ENCODE measurements at regions of chr4 and their contacts with region 1.

Region 1: GRCh38 chr4:10951306-10951705 is 266.7 kb upstream of the CLNK start:
- DNase-seq: no peak
- ATAC-seq: no peak
- H3K4me3 ChIP-seq: no peak overlapping the region
- H3K4me3 Mint-ChIP-seq: no peak overlapping the region
- H3K27ac ChIP-seq: no peak overlapping the region
- H3K27ac Mint-ChIP-seq: no peak overlapping the region
- H3K4me1 ChIP-seq: no peaks in the 10 kb centered on the region
- H3K4me1 Mint-ChIP-seq: peaks cover 0 to 19% (median 11%) of the 10 kb centered on the region in 7 donors
- H3K27me3 ChIP-seq: no peaks in the 10 kb centered on the region
- H3K27me3 Mint-ChIP-seq: peaks cover 0 to 8% (median 0%) of the 10 kb centered on the region in 5 donors

Region 2: DNA sequence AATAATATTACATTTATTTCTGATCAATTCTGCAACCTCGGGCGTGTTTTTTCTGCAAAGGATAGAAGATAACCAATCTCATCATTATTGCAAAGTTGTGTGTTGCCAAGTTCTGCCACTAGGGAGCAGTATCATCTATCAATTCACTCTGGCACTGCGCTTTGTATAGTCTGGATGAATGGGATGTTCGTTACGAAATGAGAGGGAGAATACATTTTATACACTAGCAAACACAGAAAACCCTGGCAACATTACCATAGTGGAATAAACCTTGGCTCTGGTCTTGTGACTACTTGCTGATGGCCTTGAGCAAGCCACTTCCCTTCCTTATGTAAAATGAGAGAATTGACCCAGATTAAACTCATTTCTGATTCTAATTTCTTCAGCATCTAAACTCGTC is 396.6 kb before region 1 on chr4:
- CTCF ChIA-PET with region 1: no interaction called
- POLR2A ChIA-PET with region 1: no interaction called
- intact Hi-C with region 1: no loop called
- DNase-seq: peak in 6 of 9 donors; percentile 12 to 55 (median 40)
- ATAC-seq: peak; percentile 76
- H3K4me3 ChIP-seq: no peak overlapping the region
- H3K4me3 Mint-ChIP-seq: peak overlapping the region in 3 of 10 donors; percentile 2 to 32 (median 27)
- H3K27ac ChIP-seq: no peak overlapping the region
- H3K27ac Mint-ChIP-seq: no peak overlapping the region
- H3K4me1 ChIP-seq: no peaks in the 10 kb centered on the region
- H3K4me1 Mint-ChIP-seq: peaks cover 4 to 8% (median 5%) of the 10 kb centered on the region in 7 donors
- H3K27me3 ChIP-seq: no peaks in the 10 kb centered on the region
- H3K27me3 Mint-ChIP-seq: peaks cover 6 to 25% (median 19%) of the 10 kb centered on the region in 5 donors

Region 3: GRCh38 chr4:10722957-10723356 is 228.3 kb before region 1 on chr4:
- CTCF ChIA-PET with region 1: no interaction called
- POLR2A ChIA-PET with region 1: no interaction called
- intact Hi-C with region 1: loop called in 1 of 2 experiments (anchors 5 kb)
- DNase-seq: peak in 3 of 9 donors; percentile 6 to 24 (median 8)
- ATAC-seq: peak; percentile 42
- H3K4me3 ChIP-seq: no peak overlapping the region
- H3K4me3 Mint-ChIP-seq: peak overlapping the region in 1 of 10 donors; percentile 39
- H3K27ac ChIP-seq: no peak overlapping the region
- H3K27ac Mint-ChIP-seq: peak overlapping the region in 1 of 9 donors; percentile 51
- H3K4me1 ChIP-seq: no peaks in the 10 kb centered on the region
- H3K4me1 Mint-ChIP-seq: peaks cover 0 to 39% (median 2%) of the 10 kb centered on the region in 7 donors
- H3K27me3 ChIP-seq: no peaks in the 10 kb centered on the region
- H3K27me3 Mint-ChIP-seq: peaks cover 0 to 3% (median 2%) of the 10 kb centered on the region in 5 donors

Measured in naive thymus-derived CD4-positive, alpha-beta T cell (primary cell).